MCF 10A (cell line): ENCODE measurements at regions of chr4 and their contacts with region 1.

Region 1: DNA sequence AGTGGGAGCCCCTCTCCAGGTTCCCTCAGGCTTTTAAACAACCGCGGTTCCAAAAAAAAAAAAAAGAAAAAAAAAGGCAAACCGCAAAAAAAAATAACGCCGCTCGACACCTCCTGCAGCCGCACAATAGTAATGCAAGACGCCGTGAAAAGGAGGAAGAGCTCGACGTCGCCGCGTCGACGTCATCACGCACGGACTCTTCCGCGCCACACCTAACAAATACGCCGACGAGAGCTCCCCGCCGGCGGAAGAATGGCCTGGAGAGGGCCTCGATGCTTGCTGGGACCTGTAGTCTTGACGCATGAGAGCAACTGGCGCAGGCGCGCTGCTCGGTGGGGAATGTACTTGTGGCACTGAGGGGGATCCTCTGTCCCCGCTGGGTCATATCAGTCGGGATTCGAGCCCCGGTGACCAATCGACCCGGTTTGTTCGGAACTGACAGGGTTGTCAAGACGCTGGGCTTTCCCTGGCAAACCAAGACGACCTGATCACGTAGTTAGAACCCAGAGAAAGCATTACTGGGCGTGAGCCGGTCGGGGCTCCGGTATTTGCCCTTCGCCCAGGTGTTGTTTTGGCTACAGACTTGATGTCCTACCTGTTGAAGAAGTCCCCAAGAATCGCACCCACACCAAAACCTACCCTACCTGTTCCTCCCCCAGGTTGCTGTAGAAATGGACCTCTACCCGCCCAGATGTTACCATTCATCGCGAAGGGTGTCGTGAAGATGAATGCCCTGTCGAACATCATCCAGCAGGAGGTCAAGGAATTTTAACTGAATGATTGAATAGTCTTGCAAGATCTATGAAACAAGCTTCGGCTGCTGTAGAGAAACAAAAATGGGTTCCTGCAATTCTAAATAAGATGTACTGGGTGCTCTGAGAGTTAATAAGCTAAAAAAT is at the start of gene CBR4:
- DNase-seq: peak; percentile 98
- H3K4me3 Mint-ChIP-seq: peak within 1 kb of the TSS; percentile 94
- H3K27ac Mint-ChIP-seq: peak within 1 kb of the TSS; percentile 97
- H3K4me1 Mint-ChIP-seq: peaks cover 30% of the 10 kb centered on the region
- H3K27me3 Mint-ChIP-seq: no peaks in the 10 kb centered on the region
- CTCF ChIP-seq: peak; percentile 34
- total RNA-seq, gene CBR4: 19.2 and 24.0 TPM in 2 replicates

Region 2: GRCh38 chr4:168183717-168184608 is 826.4 kb before region 1 on chr4:
- CTCF ChIA-PET with region 1: no interaction called
- POLR2A ChIA-PET with region 1: no interaction called
- intact Hi-C with region 1: loop called (anchors 1 kb)
- DNase-seq: peak; percentile 50
- H3K4me3 Mint-ChIP-seq: no peak overlapping the region
- H3K27ac Mint-ChIP-seq: peak overlapping the region; percentile 4
- H3K4me1 Mint-ChIP-seq: no peaks in the 10 kb centered on the region
- H3K27me3 Mint-ChIP-seq: no peaks in the 10 kb centered on the region
- CTCF ChIP-seq: peak; percentile 66

Region 3: DNA sequence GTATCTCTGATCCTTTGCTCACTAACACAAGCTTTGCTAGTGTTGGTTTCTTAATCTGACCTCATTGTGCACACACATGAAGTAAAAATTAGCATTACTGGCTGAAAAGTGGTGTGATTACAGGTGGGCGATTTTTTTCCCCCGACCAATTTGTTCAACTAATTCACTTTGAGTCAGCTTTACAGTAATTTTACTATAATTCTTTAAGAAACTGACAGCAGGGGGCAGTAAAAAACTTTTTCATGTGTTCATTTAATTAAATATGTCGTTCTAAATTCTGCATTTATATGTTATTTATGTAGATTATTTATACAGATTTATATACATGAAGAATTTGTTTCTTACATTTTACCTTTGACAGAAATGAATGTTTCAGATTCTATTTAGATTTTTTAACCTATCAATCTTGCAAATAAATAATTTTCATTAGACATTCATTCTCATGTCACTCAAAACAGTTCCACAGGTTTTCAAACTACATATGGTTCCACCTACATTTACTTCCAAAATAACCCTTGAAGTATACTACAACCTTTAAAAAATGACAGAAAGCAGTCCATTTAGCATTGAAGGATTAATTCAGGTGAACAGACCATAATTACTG is 496.0 kb before region 1 on chr4:
- CTCF ChIA-PET with region 1: interaction called, 3 read pairs
- POLR2A ChIA-PET with region 1: no interaction called
- intact Hi-C with region 1: loop called (anchors 1 kb)
- DNase-seq: peak; percentile 69
- H3K4me3 Mint-ChIP-seq: no peak overlapping the region
- H3K27ac Mint-ChIP-seq: no peak overlapping the region
- H3K4me1 Mint-ChIP-seq: peaks cover 10% of the 10 kb centered on the region
- H3K27me3 Mint-ChIP-seq: no peaks in the 10 kb centered on the region
- CTCF ChIP-seq: peak; percentile 33

Region 4: GRCh38 chr4:168995537-168996295 is 14.7 kb before region 1 on chr4:
- CTCF ChIA-PET with region 1: interaction called, 15 read pairs
- POLR2A ChIA-PET with region 1: interaction called, 37 read pairs
- intact Hi-C with region 1: no loop called
- DNase-seq: peak; percentile 17
- H3K4me3 Mint-ChIP-seq: no peak overlapping the region
- H3K27ac Mint-ChIP-seq: no peak overlapping the region
- H3K4me1 Mint-ChIP-seq: peaks cover 17% of the 10 kb centered on the region
- H3K27me3 Mint-ChIP-seq: no peaks in the 10 kb centered on the region
- CTCF ChIP-seq: peak; percentile 20

Region 5: DNA sequence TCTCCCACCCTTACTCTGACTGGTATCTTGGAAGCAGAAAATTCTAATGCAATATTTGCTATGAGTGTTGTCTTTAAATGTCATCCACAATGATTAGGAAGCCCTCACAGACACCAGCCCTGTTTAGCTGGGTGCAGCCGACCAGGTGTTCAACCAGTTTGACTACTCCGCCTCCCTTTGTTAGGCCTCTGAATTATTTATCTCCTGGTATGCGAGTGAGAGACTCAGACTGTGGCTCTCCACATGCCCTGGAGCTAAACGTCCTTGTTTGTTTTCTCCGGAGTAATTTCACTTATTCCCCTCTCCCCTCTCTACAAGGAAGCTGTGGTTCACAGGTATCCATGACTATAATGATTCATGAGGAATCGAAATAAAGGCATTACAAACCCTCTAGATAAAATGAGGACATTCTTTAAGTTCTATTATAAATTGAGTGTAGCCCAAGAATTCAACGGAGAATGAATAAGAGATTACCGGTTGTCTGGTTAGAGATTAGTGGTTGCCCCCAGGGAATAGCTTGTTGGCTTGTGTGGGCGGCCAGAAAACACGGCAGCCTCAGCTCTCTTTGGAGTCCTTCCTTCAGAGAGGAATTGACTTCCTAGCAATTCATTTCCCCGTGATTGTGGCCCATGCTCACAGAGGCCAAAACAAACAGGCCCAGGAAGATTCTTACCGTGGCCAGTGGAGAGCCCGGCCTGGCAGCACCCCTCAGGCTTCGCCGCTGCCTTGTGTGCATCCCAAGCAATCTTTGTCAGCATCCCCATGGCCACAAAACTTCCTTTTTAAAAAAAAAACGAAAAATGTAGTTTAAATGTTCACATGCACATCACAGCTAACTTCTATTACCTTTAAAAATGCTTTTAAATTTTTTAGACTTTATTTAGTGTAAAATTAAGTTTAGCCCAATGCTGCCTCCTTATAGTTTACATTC is 59.9 kb after region 1 on chr4:
- CTCF ChIA-PET with region 1: interaction called, 4 read pairs
- POLR2A ChIA-PET with region 1: interaction called, 12 read pairs
- intact Hi-C with region 1: no loop called
- DNase-seq: peak; percentile 82
- H3K4me3 Mint-ChIP-seq: peak overlapping the region; percentile 28
- H3K27ac Mint-ChIP-seq: peak overlapping the region; percentile 96
- H3K4me1 Mint-ChIP-seq: peaks cover 17% of the 10 kb centered on the region
- H3K27me3 Mint-ChIP-seq: no peaks in the 10 kb centered on the region
- CTCF ChIP-seq: no peak

Region 6: GRCh38 chr4:169332583-169332982 is 322.2 kb after region 1 on chr4:
- CTCF ChIA-PET with region 1: no interaction called
- POLR2A ChIA-PET with region 1: no interaction called
- intact Hi-C with region 1: no loop called
- DNase-seq: no peak
- H3K4me3 Mint-ChIP-seq: no peak overlapping the region
- H3K27ac Mint-ChIP-seq: no peak overlapping the region
- H3K4me1 Mint-ChIP-seq: peaks cover 11% of the 10 kb centered on the region
- H3K27me3 Mint-ChIP-seq: no peaks in the 10 kb centered on the region
- CTCF ChIP-seq: no peak

Region 7: GRCh38 chr4:169485791-169486742 is 475.7 kb after region 1 on chr4:
- CTCF ChIA-PET with region 1: interaction called, 8 read pairs
- POLR2A ChIA-PET with region 1: interaction called, 10 read pairs
- intact Hi-C with region 1: no loop called
- DNase-seq: peak; percentile 66
- H3K4me3 Mint-ChIP-seq: no peak overlapping the region
- H3K27ac Mint-ChIP-seq: peak overlapping the region; percentile 15
- H3K4me1 Mint-ChIP-seq: no peaks in the 10 kb centered on the region
- H3K27me3 Mint-ChIP-seq: no peaks in the 10 kb centered on the region
- CTCF ChIP-seq: peak; percentile 51